ENCODE measurements at regions of chr20 and their contacts with region 1.

Region 1: DNA sequence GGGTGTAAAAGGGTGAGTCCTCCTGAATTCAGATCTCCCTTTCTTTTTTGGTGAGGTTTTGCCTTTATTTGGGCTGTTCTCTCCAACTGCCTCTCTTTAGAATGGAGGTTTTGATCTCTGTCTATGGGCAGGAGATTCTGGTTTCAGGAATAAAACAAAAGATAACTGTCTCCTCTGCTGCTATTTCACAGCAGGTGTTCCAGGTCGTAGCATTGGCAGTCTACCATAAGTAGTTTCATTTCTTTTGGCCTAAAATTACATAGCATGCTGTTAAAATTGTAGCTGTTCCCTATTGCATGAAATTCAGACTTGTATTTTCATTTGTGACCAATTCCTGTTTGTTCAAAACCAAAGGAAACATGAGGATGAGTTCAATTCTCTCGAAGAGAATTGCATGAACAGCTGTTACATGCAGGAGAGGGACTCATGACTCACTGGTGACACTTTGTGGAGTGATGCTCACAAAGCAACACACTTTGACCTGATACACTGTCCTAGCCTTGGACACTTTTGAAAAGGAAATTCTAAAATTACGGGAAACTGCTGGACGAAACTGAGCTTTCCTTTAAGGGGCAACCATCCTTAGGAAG is 76.8 kb upstream of the SIRPG start:
- DNase-seq: peak in 1 of 2 donors; percentile 77
- ATAC-seq: no peak
- H3K4me3 ChIP-seq: no peak overlapping the region
- H3K4me3 Mint-ChIP-seq: no peak overlapping the region
- H3K27ac ChIP-seq: no peak overlapping the region
- H3K27ac Mint-ChIP-seq: no peak overlapping the region
- H3K4me1 ChIP-seq: no peaks in the 10 kb centered on the region
- H3K4me1 Mint-ChIP-seq: no peaks in the 10 kb centered on the region
- H3K27me3 ChIP-seq: no peaks in the 10 kb centered on the region
- H3K27me3 Mint-ChIP-seq: peaks cover 3 to 7% of the 10 kb centered on the region in 2 donors
- CTCF ChIP-seq: no peak

Region 2: GRCh38 chr20:1555952-1556351 is 178.4 kb before region 1 on chr20:
- intact Hi-C with region 1: loop called (anchors 10 kb)
- DNase-seq: peak in 1 of 2 donors; percentile 57
- ATAC-seq: no peak
- H3K4me3 ChIP-seq: no peak overlapping the region
- H3K4me3 Mint-ChIP-seq: no peak overlapping the region
- H3K27ac ChIP-seq: no peak overlapping the region
- H3K27ac Mint-ChIP-seq: no peak overlapping the region
- H3K4me1 ChIP-seq: no peaks in the 10 kb centered on the region
- H3K4me1 Mint-ChIP-seq: no peaks in the 10 kb centered on the region
- H3K27me3 ChIP-seq: no peaks in the 10 kb centered on the region
- H3K27me3 Mint-ChIP-seq: peaks cover 7 to 29% of the 10 kb centered on the region in 2 donors
- CTCF ChIP-seq: no peak

Region 3: DNA sequence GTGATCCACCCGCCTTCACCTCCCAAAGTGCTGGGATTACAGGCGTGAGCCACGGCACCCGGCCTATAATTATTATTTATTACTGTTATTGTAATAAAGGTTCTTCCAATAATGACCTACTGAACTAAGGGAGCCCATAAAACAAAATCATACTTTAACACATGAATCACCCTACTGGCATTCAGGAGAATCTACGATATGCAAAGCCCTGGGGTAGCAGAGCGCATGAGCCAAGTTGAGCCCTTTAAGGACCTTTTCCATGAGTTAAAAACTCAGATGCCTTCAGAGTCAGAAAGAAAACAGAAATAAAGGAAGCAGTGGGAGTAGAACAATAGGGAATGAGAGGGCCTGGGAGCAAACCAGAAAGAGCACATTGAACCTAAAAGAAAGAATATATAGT is 694.7 kb after region 1 on chr20:
- intact Hi-C with region 1: no loop called
- DNase-seq: no peak
- ATAC-seq: no peak
- H3K4me3 ChIP-seq: no peak overlapping the region
- H3K4me3 Mint-ChIP-seq: no peak overlapping the region
- H3K27ac ChIP-seq: no peak overlapping the region
- H3K27ac Mint-ChIP-seq: no peak overlapping the region
- H3K4me1 ChIP-seq: no peaks in the 10 kb centered on the region
- H3K4me1 Mint-ChIP-seq: no peaks in the 10 kb centered on the region
- H3K27me3 ChIP-seq: peaks cover 3% of the 10 kb centered on the region
- H3K27me3 Mint-ChIP-seq: peaks cover 15 to 59% of the 10 kb centered on the region in 2 donors
- CTCF ChIP-seq: no peak